ENCODE measurements at regions of chr2 and their contacts with region 1.

Region 1: DNA sequence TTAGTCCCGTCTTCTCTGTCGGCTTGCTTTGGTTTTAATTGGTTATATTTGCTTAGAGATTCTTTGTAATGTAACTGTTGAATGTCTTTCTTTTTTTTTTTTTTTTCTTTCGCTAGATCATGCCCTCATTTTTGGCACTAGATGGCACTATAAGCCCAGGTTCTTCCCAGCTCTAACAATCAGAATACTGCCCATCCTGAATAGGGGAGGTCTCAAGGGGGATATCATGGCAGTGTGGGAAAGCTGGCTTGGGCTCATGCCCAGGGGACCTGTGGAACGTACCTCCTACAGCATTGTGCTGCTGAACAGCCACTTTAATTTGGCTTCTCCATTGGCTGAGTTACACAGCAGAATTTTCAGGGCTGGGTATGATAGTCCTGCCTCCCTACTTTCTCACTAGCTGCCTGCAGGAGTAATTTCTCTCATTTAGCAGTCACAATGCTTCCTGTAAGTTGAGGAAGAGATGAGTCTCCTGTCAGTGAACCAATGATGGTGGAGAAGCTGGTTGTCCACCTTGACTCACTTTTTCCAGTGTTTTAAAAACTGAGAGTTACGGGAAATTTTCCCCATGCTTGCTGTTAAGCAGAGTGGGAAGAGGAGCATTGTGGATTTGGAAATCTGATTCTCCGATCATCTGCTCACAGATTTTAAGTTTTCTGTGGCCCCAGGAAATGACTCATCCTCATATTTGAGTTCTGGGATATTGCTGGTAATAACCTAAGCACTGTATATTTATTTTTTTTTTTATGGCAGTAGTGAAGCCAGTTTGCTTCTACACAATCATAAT is 47.2 kb downstream of the RAD51AP2 start:
- DNase-seq: peak; percentile 66
- H3K4me3 ChIP-seq: peak overlapping the region in 1 of 3 experiments; percentile 0
- H3K27ac ChIP-seq: peak overlapping the region; percentile 53
- H3K4me1 ChIP-seq: peaks cover 22% of the 10 kb centered on the region
- H3K27me3 ChIP-seq: no peaks in the 10 kb centered on the region
- CTCF ChIP-seq: peak; percentile 68 to 74

Region 2: DNA sequence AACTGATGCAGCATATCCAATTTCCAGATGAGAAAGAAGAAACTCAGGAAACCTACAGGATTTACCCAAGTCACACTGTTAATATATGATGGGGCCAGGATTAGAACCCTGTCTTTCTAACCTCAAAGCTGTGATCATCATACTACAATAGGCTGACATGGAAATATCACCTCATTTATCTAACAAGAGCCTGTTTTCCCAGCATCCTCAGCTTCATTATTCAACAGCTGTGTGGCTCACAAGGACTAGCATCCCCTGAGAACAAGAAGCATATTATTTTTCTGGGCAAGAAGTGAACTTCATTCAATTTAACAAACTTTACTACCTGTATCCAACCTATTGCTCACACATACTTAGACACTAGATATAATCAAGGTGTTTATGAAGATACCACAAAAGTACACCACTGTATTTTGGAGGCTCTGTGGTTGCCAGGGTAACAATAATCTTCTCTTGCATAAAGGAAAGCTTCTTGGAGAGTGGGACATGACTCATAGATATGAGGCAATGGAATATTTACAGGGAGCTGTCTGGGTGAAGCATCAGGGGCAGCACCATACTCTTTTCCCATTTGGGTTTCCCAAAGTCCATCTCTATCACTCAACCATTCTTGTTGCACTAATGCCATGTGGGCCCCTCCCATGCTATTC is 171.0 kb before region 1 on chr2:
- CTCF ChIA-PET with region 1: no interaction called
- dilution Hi-C with region 1: no loop called
- in situ Hi-C with region 1: no loop called
- intact Hi-C with region 1: loop called (anchors 5 kb)
- DNase-seq: peak; percentile 99
- H3K4me3 ChIP-seq: no peak overlapping the region
- H3K27ac ChIP-seq: peak overlapping the region; percentile 82
- H3K4me1 ChIP-seq: peaks cover 35% of the 10 kb centered on the region
- H3K27me3 ChIP-seq: no peaks in the 10 kb centered on the region
- CTCF ChIP-seq: no peak

Region 3: GRCh38 chr2:17646081-17646554 is 175.1 kb after region 1 on chr2:
- CTCF ChIA-PET with region 1: no interaction called
- dilution Hi-C with region 1: no loop called
- in situ Hi-C with region 1: no loop called
- intact Hi-C with region 1: loop called (anchors 1 kb)
- DNase-seq: peak; percentile 84
- H3K4me3 ChIP-seq: no peak overlapping the region
- H3K27ac ChIP-seq: peak overlapping the region; percentile 28
- H3K4me1 ChIP-seq: peaks cover 37% of the 10 kb centered on the region
- H3K27me3 ChIP-seq: no peaks in the 10 kb centered on the region
- CTCF ChIP-seq: peak; percentile 77 to 90

Region 4: DNA sequence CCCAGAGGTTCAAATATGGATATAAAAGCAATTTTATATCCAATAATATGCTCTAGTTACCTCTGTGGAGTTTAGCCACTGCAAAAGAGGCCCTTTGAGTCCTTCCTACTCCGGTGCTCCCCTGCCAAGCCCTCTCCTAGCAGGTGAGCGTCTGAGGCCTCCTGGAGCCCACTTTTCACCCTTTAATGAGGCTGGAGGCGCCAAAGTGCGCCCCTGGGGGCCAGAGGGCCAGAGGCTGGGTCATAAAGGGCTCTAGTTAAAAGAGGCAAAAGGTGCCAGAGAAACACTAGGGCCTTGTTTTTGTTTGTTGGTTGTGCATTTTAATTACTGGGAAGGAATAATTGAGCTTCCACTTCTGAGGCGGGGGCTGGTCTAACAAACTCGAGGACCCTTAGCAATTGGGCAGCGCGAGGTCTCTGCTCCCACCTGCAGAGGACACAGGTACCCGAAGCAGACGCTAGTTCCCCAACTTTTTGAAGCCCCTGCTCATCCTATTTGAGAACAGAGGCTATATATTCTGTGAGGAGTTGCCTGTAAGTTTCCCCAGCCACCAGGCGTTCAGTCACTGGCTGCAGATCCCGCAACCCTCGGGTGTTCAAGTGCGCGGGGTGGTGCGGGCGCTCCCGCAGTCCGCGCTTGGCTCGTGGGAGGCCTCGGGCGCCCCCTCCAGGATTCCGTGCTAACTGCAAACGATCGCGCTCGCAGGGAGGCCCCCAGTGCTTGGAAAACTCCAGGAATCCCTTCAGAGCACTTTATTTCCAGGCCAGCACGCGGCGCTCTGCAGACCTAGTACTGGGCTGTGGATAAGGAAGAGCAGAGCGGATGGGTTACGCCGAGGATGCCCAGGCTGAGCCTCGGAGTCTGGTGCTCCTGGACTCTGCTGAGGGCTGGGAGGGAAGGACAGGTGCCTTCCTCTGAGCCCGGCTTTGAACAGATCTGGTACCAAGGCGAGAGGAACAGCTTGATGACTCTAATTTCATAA is 359.3 kb after region 1 on chr2:
- CTCF ChIA-PET with region 1: no interaction called
- dilution Hi-C with region 1: no loop called
- in situ Hi-C with region 1: no loop called
- intact Hi-C with region 1: loop called (anchors 2 kb)
- DNase-seq: peak; percentile 69
- H3K4me3 ChIP-seq: peak overlapping the region; percentile 21 to 28 (median 28)
- H3K27ac ChIP-seq: no peak overlapping the region
- H3K4me1 ChIP-seq: no peaks in the 10 kb centered on the region
- H3K27me3 ChIP-seq: no peaks in the 10 kb centered on the region
- CTCF ChIP-seq: peak; percentile 85 to 98